Activated T-helper 1 cell treated with anti-CD3 and anti-CD28 coated beads, Interleukin-12 subunit alpha, Interleukin-12 subunit beta, Interleukin-2, Interleukin-4 antibody, amounts not matched to agents 30 ng/mL and 10 ng/mL and 1 ng/mL, durations not matched to agents 14 hours and 24 hours and 36 hours (primary cell): ENCODE measurements at regions of chr1 and their contacts with region 1.

Region 1: DNA sequence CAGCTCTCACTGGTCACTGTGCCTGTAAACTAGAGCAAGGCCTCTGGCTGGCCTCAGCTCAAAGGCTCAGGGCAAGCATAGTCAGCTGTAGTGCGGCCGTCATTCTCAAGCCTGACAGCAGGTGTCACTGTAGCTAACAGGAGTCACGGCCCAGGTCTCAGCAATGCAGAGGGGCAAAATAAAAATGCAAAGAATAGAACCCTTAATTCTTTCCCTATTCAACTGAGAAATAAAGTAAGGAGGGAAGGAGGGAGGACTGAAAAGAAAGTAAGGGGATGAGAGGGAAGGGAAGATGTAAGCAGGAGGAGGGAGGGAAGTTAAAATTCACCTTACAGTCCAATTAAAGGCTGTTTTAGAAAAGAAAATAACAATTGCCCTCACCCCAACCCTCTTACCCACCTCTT is 106.1 kb downstream of the KIAA0319L start:
- DNase-seq: peak; percentile 65
- H3K4me3 Mint-ChIP-seq: no peak overlapping the region
- H3K27ac Mint-ChIP-seq: peak overlapping the region; percentile 71
- H3K4me1 Mint-ChIP-seq: peaks cover 48% of the 10 kb centered on the region
- H3K27me3 Mint-ChIP-seq: no peaks in the 10 kb centered on the region

Region 2: GRCh38 chr1:35431173-35431599 is 19.9 kb before region 1 on chr1:
- intact Hi-C with region 1: no loop called
- DNase-seq: no peak
- H3K4me3 Mint-ChIP-seq: no peak overlapping the region
- H3K27ac Mint-ChIP-seq: peak overlapping the region; percentile 32
- H3K4me1 Mint-ChIP-seq: peaks cover 15% of the 10 kb centered on the region
- H3K27me3 Mint-ChIP-seq: peaks cover 2% of the 10 kb centered on the region

Region 3: GRCh38 chr1:35505908-35506798 is 55.0 kb after region 1 on chr1:
- intact Hi-C with region 1: loop called (anchors 1 kb)
- DNase-seq: peak; percentile 70
- H3K4me3 Mint-ChIP-seq: peak overlapping the region; percentile 69
- H3K27ac Mint-ChIP-seq: peak overlapping the region; percentile 94
- H3K4me1 Mint-ChIP-seq: peaks cover 76% of the 10 kb centered on the region
- H3K27me3 Mint-ChIP-seq: no peaks in the 10 kb centered on the region

Region 4: DNA sequence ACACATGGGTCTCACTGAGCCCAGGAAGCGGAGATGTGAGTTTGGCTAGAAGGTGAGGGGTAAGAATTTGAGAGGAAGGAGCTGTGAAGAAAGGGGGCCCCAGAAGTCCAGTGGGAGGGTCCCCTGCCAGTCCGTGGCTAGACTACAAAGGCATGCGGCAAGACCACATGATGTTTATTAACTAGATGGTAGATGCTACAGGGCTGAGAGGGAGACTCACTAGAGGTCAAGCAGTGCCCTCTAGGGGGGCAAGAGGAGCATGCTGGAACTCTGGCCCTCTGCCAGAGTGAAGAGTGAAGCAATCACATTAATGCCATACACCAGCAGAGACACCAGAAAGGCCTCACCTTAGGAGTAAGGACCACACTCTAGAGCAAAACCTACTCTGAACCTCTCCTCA is 93.9 kb after region 1 on chr1:
- intact Hi-C with region 1: loop called (anchors 1 kb)
- DNase-seq: peak; percentile 44
- H3K4me3 Mint-ChIP-seq: no peak overlapping the region
- H3K27ac Mint-ChIP-seq: no peak overlapping the region
- H3K4me1 Mint-ChIP-seq: peaks cover 57% of the 10 kb centered on the region
- H3K27me3 Mint-ChIP-seq: no peaks in the 10 kb centered on the region

Region 5: DNA sequence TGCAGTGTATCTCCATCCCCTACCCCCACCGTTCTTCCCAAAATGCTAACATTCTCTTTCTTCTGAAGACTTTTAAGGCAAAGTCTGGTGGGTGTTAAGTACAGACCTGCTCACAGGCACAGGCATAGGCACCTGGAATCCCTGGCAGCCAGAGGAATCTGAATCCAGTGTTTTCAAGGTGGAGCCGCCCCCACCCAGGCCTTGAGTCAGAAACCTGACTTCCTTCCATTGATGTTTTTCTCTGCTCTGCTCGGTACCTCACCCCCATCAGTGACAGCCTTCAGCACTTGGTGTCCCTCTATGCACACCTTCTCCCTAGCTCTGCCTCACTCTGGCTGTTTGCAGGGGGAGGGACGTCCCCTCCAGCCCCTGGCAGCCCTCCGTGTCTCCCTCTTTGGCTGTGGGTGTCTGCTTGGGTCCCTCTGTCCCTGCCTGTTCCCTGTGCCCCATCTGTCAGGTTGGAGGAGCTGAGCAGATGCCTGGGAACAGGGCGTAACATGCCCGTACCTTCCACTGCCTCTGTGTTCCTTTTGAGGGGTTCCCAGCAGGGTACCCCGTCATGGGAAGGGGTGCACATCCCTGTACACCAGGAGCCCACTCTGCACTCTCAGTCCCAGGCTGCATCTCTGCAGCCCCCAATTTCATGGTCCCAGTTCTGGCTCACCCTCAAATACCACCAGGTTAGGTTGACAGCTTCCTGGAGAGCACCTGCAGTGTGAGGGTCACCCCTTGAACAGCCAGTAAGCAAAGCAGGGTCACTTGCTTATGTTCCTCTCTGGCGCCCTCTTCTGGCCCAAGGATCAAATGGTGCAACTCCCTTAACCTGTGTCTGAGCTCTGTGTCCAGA is 113.1 kb after region 1 on chr1:
- intact Hi-C with region 1: loop called (anchors 1 kb)
- DNase-seq: peak; percentile 69
- H3K4me3 Mint-ChIP-seq: peak overlapping the region; percentile 3
- H3K27ac Mint-ChIP-seq: no peak overlapping the region
- H3K4me1 Mint-ChIP-seq: peaks cover 42% of the 10 kb centered on the region
- H3K27me3 Mint-ChIP-seq: no peaks in the 10 kb centered on the region

Region 6: GRCh38 chr1:35726450-35727433 is 275.6 kb after region 1 on chr1:
- intact Hi-C with region 1: loop called (anchors 1 kb)
- DNase-seq: peak; percentile 20
- H3K4me3 Mint-ChIP-seq: no peak overlapping the region
- H3K27ac Mint-ChIP-seq: no peak overlapping the region
- H3K4me1 Mint-ChIP-seq: peaks cover 9% of the 10 kb centered on the region
- H3K27me3 Mint-ChIP-seq: no peaks in the 10 kb centered on the region

Region 7: DNA sequence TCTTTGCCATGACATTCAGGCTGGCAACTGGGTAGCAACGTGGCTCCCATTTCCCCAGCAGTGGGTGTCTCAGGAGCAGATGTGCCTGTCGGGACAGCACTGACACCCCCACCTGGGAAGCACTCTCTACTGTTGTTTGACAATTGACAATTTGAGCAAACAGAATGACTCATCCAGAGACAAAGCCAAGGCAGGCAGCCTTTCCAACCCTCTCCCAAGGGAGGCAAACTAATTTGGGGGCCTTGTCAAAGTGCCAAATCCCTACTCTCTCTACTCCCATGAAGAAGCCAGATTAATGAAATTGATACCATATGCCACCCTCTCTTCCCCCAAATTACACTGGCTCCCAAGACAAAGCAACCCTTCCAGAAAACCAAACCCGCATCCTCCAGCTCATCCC is 1517.6 kb after region 1 on chr1:
- intact Hi-C with region 1: no loop called
- DNase-seq: no peak
- H3K4me3 Mint-ChIP-seq: no peak overlapping the region
- H3K27ac Mint-ChIP-seq: no peak overlapping the region
- H3K4me1 Mint-ChIP-seq: no peaks in the 10 kb centered on the region
- H3K27me3 Mint-ChIP-seq: peaks cover 3% of the 10 kb centered on the region